Posterior cingulate gyrus (tissue), 11 donors: ENCODE measurements at regions of chr7 and their contacts with region 1.

Region 1: DNA sequence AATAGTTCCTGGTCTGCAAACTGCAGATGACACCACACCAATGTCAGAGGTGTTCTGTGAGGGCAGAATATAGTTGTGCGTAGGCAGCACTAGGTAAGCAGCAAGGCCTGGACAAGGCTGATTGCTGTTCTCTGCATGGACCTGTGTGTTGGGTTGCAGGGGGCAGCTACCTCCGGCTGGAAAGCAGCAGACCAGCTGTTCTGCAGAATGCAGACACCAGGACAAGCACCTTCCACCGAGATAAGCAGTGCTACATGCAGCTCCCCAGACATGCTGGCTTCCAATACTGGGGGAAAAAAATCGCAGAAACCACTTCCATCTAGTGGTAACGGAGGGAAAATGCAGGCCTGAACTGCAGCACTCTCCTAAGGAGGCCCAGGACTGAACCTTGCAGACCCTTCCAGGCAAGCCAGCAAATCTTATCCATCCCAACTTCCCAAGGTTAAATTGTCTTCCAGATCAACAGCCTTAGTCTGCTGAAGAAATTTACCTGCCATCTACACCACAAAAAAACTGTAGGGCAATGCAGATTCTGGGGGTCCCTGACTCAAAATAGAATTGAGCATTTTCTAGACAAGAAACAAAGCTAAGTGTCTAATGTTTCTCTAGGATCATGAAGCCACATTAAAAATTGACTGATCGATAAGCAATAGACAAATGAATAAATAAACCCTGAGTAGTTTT is 50.5 kb upstream of the COBL start:
- DNase-seq: peak in 6 of 10 donors; percentile 19 to 86 (median 54)

Region 2: DNA sequence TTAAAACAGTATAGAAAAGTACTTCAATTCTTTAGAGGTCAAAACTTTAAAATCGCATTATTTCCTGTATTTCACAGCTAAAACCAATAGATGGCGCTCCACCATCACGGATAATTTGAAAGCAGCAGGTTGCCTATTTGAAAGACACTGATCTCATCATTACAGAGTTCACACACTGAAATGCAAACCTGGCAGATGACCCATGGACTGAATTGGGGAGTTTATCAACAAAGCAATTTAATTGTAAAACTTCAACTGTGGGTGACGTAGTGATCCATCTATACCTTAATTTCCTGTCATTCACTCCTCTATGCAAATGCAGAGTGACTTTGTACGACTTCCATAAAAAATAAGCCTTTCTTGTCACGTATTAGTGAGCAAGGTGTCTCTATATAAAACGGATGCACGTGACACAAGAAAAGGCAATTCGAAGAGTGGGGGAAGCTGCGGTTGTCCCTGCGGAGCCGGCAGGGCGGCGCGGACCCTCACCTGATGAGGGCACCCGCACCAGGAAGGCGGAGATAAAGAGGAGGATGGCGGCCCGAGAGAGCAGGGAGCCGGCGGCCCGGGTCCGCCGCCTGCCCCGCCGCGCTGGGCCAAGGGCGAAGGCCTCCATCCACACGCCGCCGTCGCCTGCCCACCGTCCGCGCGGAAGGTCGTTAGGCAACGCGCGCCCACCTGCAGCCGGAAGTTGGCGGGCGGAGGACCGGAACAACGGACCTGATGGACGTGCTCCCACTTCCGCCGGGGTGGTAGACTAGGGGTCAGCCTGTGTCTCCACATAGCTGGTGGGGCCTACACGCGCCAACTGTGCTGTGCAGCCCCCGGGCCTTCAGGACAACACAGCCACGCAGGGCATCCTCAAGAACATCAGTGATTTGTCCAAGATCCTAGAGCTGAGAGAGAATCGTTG is 1274.2 kb before region 1 on chr7 and contains the start of gene ZPBP:
- intact Hi-C with region 1: loop called (anchors 10 kb)
- DNase-seq: peak in 8 of 10 donors; percentile 15 to 87 (median 38)

Region 3: DNA sequence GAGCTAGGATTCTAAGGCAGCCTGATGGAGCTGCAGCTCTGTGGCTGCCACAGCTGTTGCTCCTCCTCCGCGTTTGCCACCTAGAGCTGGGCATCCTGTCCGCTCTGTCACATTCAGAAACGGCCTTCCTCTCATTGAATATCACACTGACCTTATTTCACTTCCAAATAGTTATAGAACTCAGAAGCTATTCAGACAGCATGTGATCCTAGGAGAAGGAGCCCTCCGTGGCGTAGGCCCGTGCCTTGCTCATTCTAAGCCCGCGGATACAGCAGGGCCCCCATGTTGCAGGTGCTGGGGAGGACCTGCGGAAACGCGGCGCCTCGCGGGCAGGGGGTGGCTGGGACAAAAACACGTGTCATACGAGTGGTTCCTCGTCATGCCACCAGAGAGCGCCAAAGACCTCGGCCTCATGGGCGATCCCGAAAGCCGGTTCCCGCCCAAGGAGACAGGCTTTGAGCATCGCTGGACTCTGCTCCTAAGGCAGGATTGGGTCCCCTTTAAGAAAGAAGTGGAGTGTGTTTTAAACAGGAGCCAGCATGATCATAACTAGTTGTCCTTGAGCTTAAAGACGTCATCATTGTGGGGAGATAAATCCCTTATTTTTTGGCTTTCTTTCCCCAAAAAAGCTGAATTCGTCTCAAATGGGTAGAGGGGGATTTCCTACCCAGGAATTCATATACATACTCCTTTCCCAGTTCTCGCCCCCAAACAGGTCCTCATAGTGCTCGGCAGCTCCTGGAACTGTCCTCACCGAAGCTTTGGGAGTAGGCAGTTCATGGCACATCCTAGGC is 899.1 kb before region 1 on chr7:
- intact Hi-C with region 1: loop called (anchors 10 kb)
- DNase-seq: peak; percentile 62 to 97 (median 83)

Region 4: DNA sequence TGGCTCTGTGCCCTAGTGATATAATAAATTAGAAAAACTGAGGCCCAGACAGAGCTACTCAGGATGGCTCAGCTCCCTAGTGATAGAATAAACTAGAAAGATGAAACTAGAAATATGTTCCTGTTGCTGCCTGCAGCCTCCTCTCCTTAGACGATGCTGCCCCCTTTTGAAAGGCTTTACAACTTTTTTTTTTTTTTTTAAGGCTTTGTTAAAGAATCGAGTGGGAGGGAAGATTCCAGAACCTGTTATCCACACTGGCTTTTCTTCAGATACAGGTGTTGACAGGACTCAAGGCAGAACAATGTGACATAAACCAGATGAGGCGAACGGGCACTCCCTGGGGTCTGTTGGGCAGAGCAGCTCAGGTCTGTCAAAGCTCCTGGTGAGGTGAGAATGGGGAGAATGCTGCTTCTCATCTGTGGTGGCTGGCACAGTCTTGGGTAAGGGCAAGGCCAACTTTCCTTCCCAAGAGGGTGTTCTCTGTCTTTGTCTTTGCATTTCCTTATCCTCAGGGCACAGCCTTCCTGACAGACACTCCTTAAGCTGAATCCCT is 225.5 kb before region 1 on chr7:
- intact Hi-C with region 1: no loop called
- DNase-seq: no peak

Region 5: DNA sequence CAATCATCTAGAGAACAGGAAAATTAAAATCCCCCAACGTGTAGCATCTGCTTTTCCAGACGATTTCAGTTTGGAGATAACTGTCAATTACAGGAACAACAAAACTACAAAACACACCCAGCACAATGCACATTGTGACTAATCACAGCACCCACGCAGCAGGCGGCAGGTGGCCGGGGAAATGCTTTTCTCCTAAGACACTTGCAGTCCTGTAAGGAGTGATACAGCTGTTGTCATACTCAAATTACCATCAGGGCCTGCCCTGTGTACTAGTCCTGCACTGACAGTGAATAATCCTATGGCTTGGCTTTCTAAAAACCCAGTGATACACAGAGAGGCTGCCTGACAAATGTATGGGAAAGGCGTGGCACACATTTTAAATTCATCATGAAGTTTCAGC is 88.3 kb before region 1 on chr7:
- intact Hi-C with region 1: no loop called
- DNase-seq: peak in 3 of 10 donors; percentile 63 to 85 (median 63)